Activated naive CD4-positive, alpha-beta T cell treated with anti-CD3 and anti-CD28 coated beads for 36 hours (primary cell): ENCODE measurements at regions of chr5 and their contacts with region 1.

Region 1: GRCh38 chr5:80407735-80408482 is at the start of gene ZFYVE16:
- DNase-seq: peak; percentile 97
- H3K4me3 Mint-ChIP-seq: peak within 1 kb of the TSS; percentile 97
- H3K27ac Mint-ChIP-seq: peak within 1 kb of the TSS; percentile 96
- H3K4me1 Mint-ChIP-seq: peaks cover 14% of the 10 kb centered on the region
- H3K27me3 Mint-ChIP-seq: no peaks in the 10 kb centered on the region
- total RNA-seq, gene ZFYVE16: 8.0 to 10.3 TPM

Region 2: GRCh38 chr5:79235634-79236363 is 1172.1 kb before region 1 on chr5 and contains the start of gene JMY:
- CTCF ChIA-PET with region 1: no interaction called
- intact Hi-C with region 1: loop called (anchors 10 kb)
- DNase-seq: peak; percentile 90
- H3K4me3 Mint-ChIP-seq: peak within 1 kb of the TSS; percentile 91
- H3K27ac Mint-ChIP-seq: peak within 1 kb of the TSS; percentile 99
- H3K4me1 Mint-ChIP-seq: peaks cover 17% of the 10 kb centered on the region
- H3K27me3 Mint-ChIP-seq: no peaks in the 10 kb centered on the region
- total RNA-seq, gene JMY: 11.8 to 12.1 TPM

Region 3: GRCh38 chr5:80191991-80192398 is 215.9 kb before region 1 on chr5:
- CTCF ChIA-PET with region 1: no interaction called
- intact Hi-C with region 1: loop called (anchors 5 kb)
- DNase-seq: peak; percentile 59
- H3K4me3 Mint-ChIP-seq: peak overlapping the region; percentile 69
- H3K27ac Mint-ChIP-seq: peak overlapping the region; percentile 97
- H3K4me1 Mint-ChIP-seq: peaks cover 80% of the 10 kb centered on the region
- H3K27me3 Mint-ChIP-seq: no peaks in the 10 kb centered on the region

Region 4: DNA sequence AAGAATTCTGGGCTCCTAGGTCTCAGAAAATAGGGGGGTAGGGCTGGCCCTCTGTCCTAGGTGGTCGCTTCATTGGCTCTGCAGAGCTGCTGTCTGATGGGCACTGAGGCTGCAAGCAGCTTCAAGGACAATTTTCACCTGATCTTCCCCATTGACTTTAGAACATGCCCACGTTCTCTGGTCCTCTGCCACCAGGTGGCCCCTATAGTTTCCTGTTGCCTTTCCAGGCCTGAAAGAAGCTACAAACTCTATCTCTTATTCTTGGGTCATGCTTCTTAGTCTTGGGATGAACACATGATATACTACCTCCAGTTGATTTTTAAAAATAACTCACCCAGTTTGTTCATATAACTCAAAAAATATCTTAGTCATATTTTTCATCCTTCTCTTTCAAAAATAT is 61.9 kb before region 1 on chr5:
- CTCF ChIA-PET with region 1: no interaction called
- intact Hi-C with region 1: loop called (anchors 2 kb)
- DNase-seq: peak; percentile 63
- H3K4me3 Mint-ChIP-seq: no peak overlapping the region
- H3K27ac Mint-ChIP-seq: no peak overlapping the region
- H3K4me1 Mint-ChIP-seq: no peaks in the 10 kb centered on the region
- H3K27me3 Mint-ChIP-seq: peaks cover 4% of the 10 kb centered on the region

Region 5: DNA sequence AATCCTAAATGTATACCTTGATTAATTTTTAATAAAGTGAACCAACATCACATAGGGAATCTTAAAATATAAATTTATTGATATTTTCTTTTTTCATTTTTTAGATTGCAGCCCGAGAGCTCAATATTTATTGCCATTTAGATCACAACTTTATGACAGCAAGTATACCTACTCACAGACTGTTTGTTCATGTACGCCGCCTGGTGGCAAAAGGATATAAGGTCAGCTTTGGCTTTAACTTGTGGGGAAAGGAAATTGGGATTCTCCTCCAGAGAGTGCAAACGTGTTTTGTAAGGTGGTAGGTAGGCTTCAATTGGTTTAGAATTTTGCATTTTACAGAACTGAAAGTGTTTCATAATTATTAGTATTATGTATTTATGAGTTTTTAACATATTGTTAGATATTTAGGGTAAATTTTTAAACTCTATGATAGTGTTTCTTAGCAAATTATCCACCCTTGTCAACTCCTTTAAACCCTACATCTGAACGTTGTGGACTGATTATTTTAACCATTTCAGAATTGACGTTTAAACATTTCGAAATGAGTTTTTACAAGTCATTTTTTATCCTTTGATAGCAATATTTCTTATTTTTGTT is 264.3 kb after region 1 on chr5:
- CTCF ChIA-PET with region 1: no interaction called
- intact Hi-C with region 1: loop called (anchors 5 kb)
- DNase-seq: peak; percentile 85
- H3K4me3 Mint-ChIP-seq: no peak overlapping the region
- H3K27ac Mint-ChIP-seq: no peak overlapping the region
- H3K4me1 Mint-ChIP-seq: no peaks in the 10 kb centered on the region
- H3K27me3 Mint-ChIP-seq: no peaks in the 10 kb centered on the region

Region 6: DNA sequence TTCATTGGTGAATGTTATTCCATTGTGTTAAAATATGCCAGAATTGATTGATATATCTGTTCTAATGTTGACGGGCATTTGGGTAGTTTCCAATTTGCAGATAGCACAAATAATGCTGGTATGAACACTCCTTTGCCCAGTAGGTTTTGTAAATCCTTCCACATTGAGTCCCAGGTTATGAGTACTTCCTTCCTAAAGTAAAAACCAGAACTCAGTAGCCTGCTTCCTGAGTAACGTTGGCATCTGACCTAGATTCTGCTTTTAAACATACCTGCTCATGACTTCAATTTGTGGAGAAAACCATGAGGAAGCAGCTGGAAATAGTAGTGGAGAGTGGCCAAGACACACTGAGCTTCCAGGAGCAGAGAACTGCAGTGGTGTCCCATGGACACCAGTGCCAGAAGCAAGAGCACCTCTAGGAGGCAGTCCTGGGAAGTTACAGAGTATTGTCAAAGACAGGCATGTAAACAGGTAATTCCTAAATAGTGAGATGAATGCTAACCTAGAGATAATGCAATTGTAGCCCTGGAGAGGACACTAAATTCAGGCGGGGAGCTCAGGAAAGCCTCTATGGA is 528.0 kb after region 1 on chr5:
- CTCF ChIA-PET with region 1: no interaction called
- intact Hi-C with region 1: no loop called
- DNase-seq: peak; percentile 20
- H3K4me3 Mint-ChIP-seq: no peak overlapping the region
- H3K27ac Mint-ChIP-seq: no peak overlapping the region
- H3K4me1 Mint-ChIP-seq: peaks cover 4% of the 10 kb centered on the region
- H3K27me3 Mint-ChIP-seq: no peaks in the 10 kb centered on the region